Right ventricle myocardium inferior (tissue), 1 donor: ENCODE measurements at regions of chr5 and their contacts with region 1.

Region 1: GRCh38 chr5:133944263-133945185 is 23.9 kb downstream of the C5orf15 start:
- DNase-seq: no peak
- ATAC-seq: no peak

Region 2: GRCh38 chr5:133423618-133424282 is 520.8 kb before region 1 on chr5:
- intact Hi-C with region 1: loop called (anchors 10 kb)
- DNase-seq: peak; percentile 83
- ATAC-seq: peak; percentile 77

Region 3: DNA sequence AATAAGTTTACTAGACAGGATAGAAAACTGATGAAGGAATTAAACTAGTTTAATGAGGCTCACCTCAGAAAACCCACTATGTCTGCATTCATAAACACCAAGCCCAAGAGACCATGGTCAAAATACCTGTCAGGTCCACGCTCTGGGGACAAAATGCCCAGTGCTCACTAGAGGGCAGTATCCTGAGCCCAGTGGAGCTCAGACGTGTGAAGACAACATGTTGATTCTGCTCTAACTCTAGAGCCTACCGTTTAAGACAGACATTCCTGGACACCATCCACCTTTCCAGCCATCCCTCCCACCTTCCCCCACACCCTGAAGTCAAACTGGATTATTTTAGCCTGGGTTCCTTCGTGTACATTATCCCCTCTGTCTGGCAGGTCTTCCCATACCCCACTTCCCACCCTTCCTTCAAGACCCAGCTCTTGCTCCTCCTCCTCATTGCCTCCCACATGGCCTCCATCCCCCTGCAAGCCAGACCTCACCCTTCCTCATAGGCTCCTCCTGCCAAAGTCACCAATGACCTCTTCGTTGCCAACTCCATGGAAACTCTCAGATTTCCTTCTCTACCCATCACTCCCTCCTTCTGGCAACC is 189.9 kb before region 1 on chr5:
- intact Hi-C with region 1: loop called (anchors 10 kb)
- DNase-seq: no peak
- ATAC-seq: no peak